ENCODE measurements at regions of chr6 and their contacts with region 1.

Region 1: GRCh38 chr6:115958958-115959357 is 101.7 kb downstream of the FRK start:
- DNase-seq: no peak
- ATAC-seq: no peak
- H3K4me3 ChIP-seq: no peak overlapping the region
- H3K27ac ChIP-seq: no peak overlapping the region
- H3K4me1 ChIP-seq: no peaks in the 10 kb centered on the region
- H3K27me3 ChIP-seq: no peaks in the 10 kb centered on the region
- CTCF ChIP-seq: no peak
- POLR2A ChIP-seq: no peak

Region 2: DNA sequence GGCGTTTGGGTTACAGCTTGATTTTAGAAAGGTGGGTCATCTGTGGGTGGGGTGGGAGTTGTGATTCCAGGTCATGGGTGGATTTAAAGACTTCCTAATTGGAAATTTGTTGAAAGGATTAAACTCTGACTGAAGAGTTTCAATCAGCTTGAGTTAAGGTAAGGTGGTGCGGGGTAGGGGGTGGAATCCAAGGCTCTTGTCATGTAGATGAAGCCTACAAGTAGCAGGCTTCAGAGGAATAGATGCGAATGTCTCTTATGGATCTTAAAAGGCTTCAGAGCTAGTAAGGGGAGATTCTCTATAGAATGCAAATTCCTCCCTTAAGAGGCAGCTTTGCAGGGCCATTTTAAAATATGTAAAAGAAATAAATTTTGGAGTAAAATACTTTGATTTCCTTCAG is 543.6 kb before region 1 on chr6:
- in situ Hi-C with region 1: no loop called
- intact Hi-C with region 1: loop called (anchors 10 kb)
- DNase-seq: no peak
- ATAC-seq: no peak
- H3K4me3 ChIP-seq: no peak overlapping the region
- H3K27ac ChIP-seq: no peak overlapping the region
- H3K4me1 ChIP-seq: no peaks in the 10 kb centered on the region
- H3K27me3 ChIP-seq: no peaks in the 10 kb centered on the region
- CTCF ChIP-seq: no peak
- POLR2A ChIP-seq: no peak